ENCODE measurements at regions of chr19 and their contacts with region 1.

Region 1: DNA sequence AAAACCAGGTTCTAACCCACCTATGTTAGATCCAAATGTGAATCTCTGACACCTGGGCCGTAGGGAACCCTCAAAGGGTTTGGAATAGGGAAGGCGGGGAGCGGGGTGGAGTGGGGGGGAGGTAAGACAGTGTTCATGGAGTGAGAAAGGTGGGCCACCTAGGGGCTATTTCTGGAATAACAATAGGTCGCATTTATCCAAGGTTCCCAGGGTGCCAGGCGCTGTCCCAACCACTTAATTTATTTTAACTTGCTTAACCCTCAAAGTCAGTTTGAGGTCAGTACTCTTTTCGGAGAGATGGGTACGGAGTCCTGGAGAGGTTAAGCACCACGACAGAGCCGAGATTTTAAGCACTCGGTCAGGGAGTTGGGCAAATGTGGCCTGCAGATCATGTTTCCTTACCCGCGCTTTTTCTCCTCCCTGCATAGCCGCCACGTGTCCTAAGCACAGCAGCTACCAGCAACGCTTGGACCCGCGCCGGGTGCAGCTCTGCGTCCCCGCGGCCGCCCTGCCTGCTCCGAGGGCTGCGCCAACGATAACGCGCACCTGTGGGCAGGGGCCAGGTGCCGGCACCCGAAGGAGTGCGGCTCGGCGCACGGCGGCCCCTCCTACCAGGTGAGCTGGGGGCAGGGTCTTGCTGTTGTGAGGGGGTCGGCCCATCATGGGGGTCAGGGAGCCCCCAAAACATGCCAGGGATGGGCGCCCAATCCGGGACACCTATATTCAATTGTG is 25.0 kb upstream of the FXYD3 start:
- DNase-seq: no peak
- H3K4me3 Mint-ChIP-seq: no peak overlapping the region
- H3K27ac Mint-ChIP-seq: no peak overlapping the region
- H3K4me1 Mint-ChIP-seq: no peaks in the 10 kb centered on the region
- H3K27me3 Mint-ChIP-seq: peaks cover 3% of the 10 kb centered on the region

Region 2: DNA sequence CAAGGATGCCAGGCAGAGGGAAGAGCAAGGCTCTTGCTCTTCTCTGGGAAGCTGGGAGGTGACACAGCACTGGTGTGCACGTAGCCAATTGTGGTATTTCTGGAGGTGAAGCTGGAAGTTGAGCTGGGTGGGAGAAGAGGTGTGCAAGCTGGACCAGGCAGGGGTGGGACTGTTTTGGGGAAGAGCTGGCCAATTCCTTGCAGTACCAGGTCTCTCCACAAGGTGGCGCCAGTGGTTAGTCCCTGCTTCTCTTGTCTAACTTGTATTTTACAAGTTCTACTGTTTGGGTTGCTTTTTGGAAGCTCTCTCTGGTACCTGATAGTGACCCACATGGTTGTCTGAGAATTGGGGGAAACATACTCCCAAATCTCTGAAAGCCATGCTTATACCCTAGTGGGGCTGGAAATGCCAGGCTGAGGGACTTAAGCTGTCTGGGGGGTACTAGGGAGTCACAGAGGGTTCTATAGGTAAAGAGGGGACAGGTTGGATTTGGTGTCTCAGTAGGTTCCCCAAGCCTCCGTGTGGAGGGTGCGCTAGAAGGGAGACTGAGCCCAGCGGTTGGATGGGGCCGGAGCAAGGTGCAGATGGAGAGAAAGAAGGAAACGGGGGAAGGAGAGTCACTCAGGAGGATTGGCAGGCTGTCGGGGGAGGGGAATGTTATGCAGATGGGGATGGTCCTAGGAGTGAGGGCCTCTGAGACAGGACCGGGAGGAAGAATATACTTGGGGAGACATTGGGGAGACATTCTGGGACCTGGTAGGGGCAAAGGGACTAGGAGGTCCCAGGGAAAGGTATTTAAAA is 46.2 kb before region 1 on chr19:
- intact Hi-C with region 1: loop called (anchors 2 kb)
- DNase-seq: peak; percentile 32
- H3K4me3 Mint-ChIP-seq: no peak overlapping the region
- H3K27ac Mint-ChIP-seq: no peak overlapping the region
- H3K4me1 Mint-ChIP-seq: peaks cover 28% of the 10 kb centered on the region
- H3K27me3 Mint-ChIP-seq: peaks cover 9% of the 10 kb centered on the region

Measured in activated T-helper 1 cell treated with anti-CD3 and anti-CD28 coated beads, Interleukin-12 subunit alpha, Interleukin-12 subunit beta, Interleukin-2, Interleukin-4 antibody, amounts not matched to agents 30 ng/mL and 10 ng/mL and 1 ng/mL, durations not matched to agents 14 hours and 24 hours and 36 hours (primary cell).